Activated CD4-positive, alpha-beta T cell treated with anti-CD3 and anti-CD28 coated beads for 36 hours (primary cell): ENCODE measurements at regions of chr20 and their contacts with region 1.

Region 1: DNA sequence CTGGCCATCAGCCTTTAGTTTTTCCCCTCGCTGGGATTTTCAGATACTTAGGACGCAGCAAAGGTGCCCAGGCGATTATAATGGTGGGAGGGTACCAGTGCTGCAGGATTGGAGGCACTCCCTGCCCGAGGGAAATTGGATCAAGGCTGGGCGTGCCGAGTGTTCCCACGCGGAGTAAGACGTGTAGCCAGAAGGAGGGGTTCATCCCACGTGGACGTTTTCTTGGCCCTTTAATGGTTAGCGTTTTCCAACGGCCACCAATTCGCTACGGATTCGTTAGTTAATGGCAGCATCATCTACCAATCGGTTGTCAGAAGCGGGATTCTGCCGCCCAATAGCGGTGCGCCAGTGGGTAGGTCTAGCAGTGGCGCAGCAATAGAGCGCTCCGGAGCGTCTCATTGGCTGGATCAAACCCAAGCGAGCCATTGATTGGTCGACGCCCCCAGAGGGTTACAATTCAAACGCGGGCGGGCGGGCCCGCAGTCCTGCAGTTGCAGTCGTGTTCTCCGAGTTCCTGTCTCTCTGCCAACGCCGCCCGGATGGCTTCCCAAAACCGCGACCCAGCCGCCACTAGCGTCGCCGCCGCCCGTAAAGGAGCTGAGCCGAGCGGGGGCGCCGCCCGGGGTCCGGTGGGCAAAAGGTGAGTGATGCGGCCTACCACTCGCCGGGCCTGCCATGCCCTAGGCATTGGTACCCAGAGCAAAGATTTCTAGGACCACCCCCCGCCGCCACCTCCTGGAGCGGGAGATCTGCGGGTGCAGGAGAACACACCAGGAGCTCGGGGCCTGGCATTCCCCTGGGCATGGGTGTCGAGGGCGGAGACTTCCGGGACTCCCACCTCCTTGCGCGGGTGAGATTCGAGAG is at the start of gene UBE2C:
- DNase-seq: peak; percentile 97
- ATAC-seq: peak; percentile 100
- H3K4me3 Mint-ChIP-seq: peak within 1 kb of the TSS; percentile 99
- H3K27ac Mint-ChIP-seq: peak within 1 kb of the TSS; percentile 88
- H3K4me1 Mint-ChIP-seq: peaks cover 21% of the 10 kb centered on the region
- H3K27me3 Mint-ChIP-seq: no peaks in the 10 kb centered on the region
- total RNA-seq, gene UBE2C: 175 to 230 TPM

Region 2: DNA sequence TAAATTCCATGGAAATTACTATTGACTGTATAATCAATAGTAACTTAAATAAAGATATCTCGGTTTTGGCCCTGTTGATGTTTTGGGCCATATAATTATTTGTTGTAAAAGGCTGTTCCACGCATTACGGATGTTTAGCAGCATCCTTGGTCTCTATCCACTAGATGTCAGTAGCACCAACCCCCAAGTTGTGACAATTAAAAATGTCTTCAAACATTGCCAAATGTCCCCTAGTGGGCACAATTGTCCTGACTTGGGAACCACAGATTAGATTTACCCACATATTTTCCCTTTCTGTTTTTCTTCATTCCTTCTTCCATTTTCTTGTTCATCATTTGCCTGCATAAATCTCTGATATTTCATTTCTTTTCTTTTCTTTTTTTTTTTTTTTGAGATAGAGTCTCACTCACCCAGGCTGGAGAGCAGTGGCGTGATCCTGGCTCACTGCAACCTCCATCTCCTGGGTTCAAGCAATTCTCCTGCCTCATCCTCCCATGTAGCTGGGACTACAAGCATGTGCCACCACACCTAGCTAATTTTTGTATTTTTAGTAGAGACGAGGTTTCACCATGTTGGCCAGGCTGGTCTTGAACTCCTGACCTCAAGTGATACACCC is 219.7 kb before region 1 on chr20:
- CTCF ChIA-PET with region 1: no interaction called
- POLR2A ChIA-PET with region 1: no interaction called
- intact Hi-C with region 1: no loop called
- DNase-seq: peak; percentile 48
- ATAC-seq: peak; percentile 78
- H3K4me3 Mint-ChIP-seq: no peak overlapping the region
- H3K27ac Mint-ChIP-seq: no peak overlapping the region
- H3K4me1 Mint-ChIP-seq: no peaks in the 10 kb centered on the region
- H3K27me3 Mint-ChIP-seq: peaks cover 24% of the 10 kb centered on the region

Region 3: DNA sequence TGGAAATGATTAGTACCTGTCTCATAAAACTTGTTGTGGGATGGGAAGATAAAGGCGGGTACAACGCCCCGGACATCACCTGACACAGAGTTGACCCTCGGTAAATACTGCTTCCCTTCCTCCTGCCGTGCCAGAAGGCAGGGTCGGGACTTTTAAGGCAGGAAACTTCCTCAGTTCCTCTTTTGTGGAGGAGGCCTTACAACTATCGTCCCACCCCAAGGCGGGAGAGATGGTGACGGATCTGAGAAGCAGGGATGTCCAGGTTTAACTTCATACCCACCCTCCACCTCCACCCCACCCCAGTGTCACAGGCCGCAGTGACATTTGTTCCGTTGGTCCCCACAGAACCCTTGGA is 20.1 kb before region 1 on chr20:
- CTCF ChIA-PET with region 1: interaction called, 4 read pairs
- POLR2A ChIA-PET with region 1: interaction called, 4 read pairs
- intact Hi-C with region 1: loop called in 1 of 2 experiments (anchors 1 kb)
- DNase-seq: peak; percentile 12
- ATAC-seq: peak; percentile 2
- H3K4me3 Mint-ChIP-seq: peak overlapping the region; percentile 81
- H3K27ac Mint-ChIP-seq: peak overlapping the region; percentile 80
- H3K4me1 Mint-ChIP-seq: peaks cover 13% of the 10 kb centered on the region
- H3K27me3 Mint-ChIP-seq: no peaks in the 10 kb centered on the region

Region 4: GRCh38 chr20:45857114-45857881 is 44.9 kb after region 1 on chr20 and contains the starts of genes ACOT8 and ZSWIM3:
- CTCF ChIA-PET with region 1: interaction called, 3 read pairs
- POLR2A ChIA-PET with region 1: interaction called, 3 read pairs
- intact Hi-C with region 1: loop called in 1 of 2 experiments (anchors 1 kb)
- DNase-seq: peak; percentile 95
- ATAC-seq: peak; percentile 97
- H3K4me3 Mint-ChIP-seq: peak within 1 kb of the TSS; percentile 93
- H3K27ac Mint-ChIP-seq: peak within 1 kb of the TSS; percentile 99
- H3K4me1 Mint-ChIP-seq: peaks cover 38% of the 10 kb centered on the region
- H3K27me3 Mint-ChIP-seq: no peaks in the 10 kb centered on the region
- total RNA-seq, gene ACOT8: 21.9 to 22.6 TPM
- total RNA-seq, gene ZSWIM3: 4.2 to 4.8 TPM

Region 5: GRCh38 chr20:45890985-45891983 is 78.9 kb after region 1 on chr20 and contains the starts of genes CTSA and NEURL2:
- CTCF ChIA-PET with region 1: interaction called, 3 read pairs
- POLR2A ChIA-PET with region 1: interaction called, 5 read pairs
- intact Hi-C with region 1: loop called (anchors 2 kb)
- DNase-seq: peak; percentile 94
- ATAC-seq: peak; percentile 80
- H3K4me3 Mint-ChIP-seq: peak within 1 kb of the TSS; percentile 89
- H3K27ac Mint-ChIP-seq: peak within 1 kb of the TSS; percentile 87
- H3K4me1 Mint-ChIP-seq: peaks cover 32% of the 10 kb centered on the region
- H3K27me3 Mint-ChIP-seq: no peaks in the 10 kb centered on the region
- total RNA-seq, gene CTSA: 36.4 to 45.6 TPM
- total RNA-seq, gene NEURL2: 1.2 to 1.9 TPM

Region 6: DNA sequence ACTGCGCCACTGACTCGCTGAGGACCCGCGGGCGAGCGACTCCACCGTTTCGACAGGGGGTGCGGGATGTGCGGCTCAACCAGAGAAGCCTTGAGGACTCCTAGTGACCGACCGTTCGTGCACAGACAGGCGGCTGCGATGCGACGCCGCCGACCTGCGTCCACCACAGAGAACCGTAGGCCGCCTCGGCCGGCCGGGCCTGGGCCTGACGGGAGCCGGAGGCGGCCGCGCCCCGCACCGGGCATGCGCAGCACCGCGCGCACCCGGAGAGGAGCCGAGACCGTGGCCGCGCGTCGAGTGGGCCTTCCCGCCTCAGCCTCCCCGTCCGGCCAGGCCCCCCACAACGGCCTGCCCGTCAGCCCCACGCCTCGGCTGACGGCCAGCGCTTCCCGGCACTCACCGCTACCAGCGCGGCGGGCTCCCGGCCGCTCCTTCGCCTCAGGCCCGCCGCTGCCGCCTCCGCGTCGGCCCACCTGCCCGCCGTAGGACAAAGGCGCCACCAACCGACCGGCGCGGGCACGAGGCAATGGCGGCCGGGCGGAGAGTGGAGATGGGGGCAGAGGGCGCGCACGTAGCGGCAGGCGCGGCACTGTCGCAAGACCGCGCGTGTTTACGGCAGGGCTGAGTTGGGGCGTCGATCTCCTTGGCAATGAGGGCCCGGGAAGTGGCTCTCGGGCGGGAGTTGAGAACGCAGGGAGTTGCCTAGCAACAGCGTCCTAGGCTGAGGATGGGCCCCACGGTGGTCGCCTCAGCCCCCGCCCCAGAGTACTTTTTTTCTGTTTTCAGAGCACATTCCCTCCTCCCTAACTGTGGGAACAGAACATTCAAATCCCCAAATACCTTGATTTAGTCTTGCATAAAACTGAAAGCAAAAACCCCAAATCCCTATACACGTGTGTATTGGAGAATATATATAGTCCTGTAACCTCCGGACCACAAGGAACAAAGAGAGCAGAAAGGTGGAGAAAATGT is 277.3 kb after region 1 on chr20 and contains the start of gene NCOA5:
- CTCF ChIA-PET with region 1: no interaction called
- POLR2A ChIA-PET with region 1: no interaction called
- intact Hi-C with region 1: loop called in 1 of 2 experiments (anchors 2 kb)
- DNase-seq: peak; percentile 97
- ATAC-seq: peak; percentile 87
- H3K4me3 Mint-ChIP-seq: peak within 1 kb of the TSS; percentile 86
- H3K27ac Mint-ChIP-seq: peak within 1 kb of the TSS; percentile 88
- H3K4me1 Mint-ChIP-seq: peaks cover 46% of the 10 kb centered on the region
- H3K27me3 Mint-ChIP-seq: no peaks in the 10 kb centered on the region
- total RNA-seq, gene NCOA5: 17.9 to 18.8 TPM

Region 7: DNA sequence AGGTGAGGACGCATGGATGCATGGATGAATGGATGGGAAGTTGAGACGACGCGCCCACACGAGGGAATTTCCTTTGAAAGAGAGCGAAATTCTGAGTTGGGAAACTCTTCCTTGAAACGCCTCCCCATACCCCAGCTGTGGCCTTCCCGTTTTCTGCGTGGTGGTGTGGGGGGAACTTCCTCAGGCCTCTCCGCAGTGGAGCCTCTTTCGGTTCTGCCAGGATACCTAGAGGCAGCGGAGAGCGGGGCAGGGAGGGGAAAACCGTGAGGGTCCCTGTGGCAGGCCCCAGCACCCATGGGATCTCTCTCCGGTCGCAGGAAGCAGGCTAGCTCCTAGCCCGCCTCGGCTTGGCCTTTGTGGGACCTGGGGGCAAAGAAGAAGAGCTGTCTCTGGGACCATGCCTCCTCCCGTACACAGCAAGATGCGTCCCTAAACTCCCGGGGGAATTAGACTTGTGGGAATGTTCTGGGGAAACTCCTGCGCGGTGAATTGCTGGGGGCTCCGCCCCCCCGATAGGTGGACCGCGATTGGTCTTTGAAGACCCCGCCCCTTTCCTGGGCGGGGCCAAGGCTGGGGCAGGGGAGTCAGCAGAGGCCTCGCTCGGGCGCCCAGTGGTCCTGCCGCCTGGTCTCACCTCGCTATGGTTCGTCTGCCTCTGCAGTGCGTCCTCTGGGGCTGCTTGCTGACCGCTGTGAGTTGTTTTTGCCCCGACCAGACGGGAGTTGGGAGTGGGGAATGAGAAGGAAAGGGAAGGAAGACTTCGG is 305.5 kb after region 1 on chr20 and contains the start of gene CD40:
- CTCF ChIA-PET with region 1: no interaction called
- POLR2A ChIA-PET with region 1: no interaction called
- intact Hi-C with region 1: no loop called
- DNase-seq: peak; percentile 81
- ATAC-seq: peak; percentile 98
- H3K4me3 Mint-ChIP-seq: peak within 1 kb of the TSS; percentile 90
- H3K27ac Mint-ChIP-seq: peak within 1 kb of the TSS; percentile 78
- H3K4me1 Mint-ChIP-seq: peaks cover 11% of the 10 kb centered on the region
- H3K27me3 Mint-ChIP-seq: peaks cover 17% of the 10 kb centered on the region
- total RNA-seq, gene CD40: 4.0 to 5.1 TPM